CD14-positive monocyte (primary cell): ENCODE measurements at regions of chr18 and their contacts with region 1.

Region 1: GRCh38 chr18:13710460-13710859 is 15.9 kb downstream of the FAM210A start:
- DNase-seq: no peak
- H3K4me3 ChIP-seq: no peak overlapping the region
- H3K4me3 Mint-ChIP-seq: no peak overlapping the region
- H3K27ac ChIP-seq: no peak overlapping the region
- H3K27ac Mint-ChIP-seq: no peak overlapping the region
- H3K4me1 ChIP-seq: no peaks in the 10 kb centered on the region
- H3K4me1 Mint-ChIP-seq: peaks cover 1% of the 10 kb centered on the region
- H3K27me3 ChIP-seq: no peaks in the 10 kb centered on the region
- H3K27me3 Mint-ChIP-seq: peaks cover 0 to 1% (median 0%) of the 10 kb centered on the region in 3 donors
- CTCF ChIP-seq: no peak

Region 2: GRCh38 chr18:13548966-13549879 is 161.2 kb before region 1 on chr18:
- intact Hi-C with region 1: loop called in 1 of 2 experiments (anchors 10 kb)
- DNase-seq: peak in 1 of 3 donors; percentile 25
- H3K4me3 ChIP-seq: peak overlapping the region in 1 of 3 experiments; percentile 39
- H3K4me3 Mint-ChIP-seq: peak overlapping the region; percentile 60 to 83
- H3K27ac ChIP-seq: peak overlapping the region; percentile 40 to 57
- H3K27ac Mint-ChIP-seq: peak overlapping the region; percentile 78 to 95 (median 91)
- H3K4me1 ChIP-seq: peaks cover 20% of the 10 kb centered on the region in 2 donors
- H3K4me1 Mint-ChIP-seq: peaks cover 28% of the 10 kb centered on the region
- H3K27me3 ChIP-seq: no peaks in the 10 kb centered on the region
- H3K27me3 Mint-ChIP-seq: peaks cover 2 to 8% (median 3%) of the 10 kb centered on the region in 3 donors
- CTCF ChIP-seq: no peak